Sigmoid colon (tissue), 7 donors: ENCODE measurements at regions of chr6 and their contacts with region 1.

Region 1: DNA sequence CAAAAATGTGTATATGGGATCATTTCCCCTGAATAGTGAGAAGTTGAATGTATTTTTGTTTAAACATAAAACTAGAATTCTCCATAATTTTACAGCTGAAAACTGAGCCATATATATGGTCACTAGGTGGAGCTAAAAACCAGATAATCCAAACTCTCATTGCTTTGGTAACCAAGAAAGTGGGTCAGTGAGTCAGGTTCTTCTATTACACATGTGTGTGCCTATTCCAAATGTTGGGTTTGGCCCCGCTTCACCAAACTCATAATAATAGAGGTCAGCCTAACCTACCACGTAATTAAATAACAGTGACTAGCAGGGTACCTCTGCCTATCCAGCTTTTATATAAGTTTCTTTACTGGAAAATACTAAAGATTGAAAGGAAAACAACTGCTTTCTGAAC is 19.3 kb upstream of the RNGTT start:
- DNase-seq: peak; percentile 84
- H3K4me3 ChIP-seq: no peak overlapping the region
- H3K27ac ChIP-seq: peak overlapping the region in 1 of 4 donors; percentile 45
- H3K4me1 ChIP-seq: peaks cover 0 to 9% (median 7%) of the 10 kb centered on the region in 4 donors
- H3K27me3 ChIP-seq: no peaks in the 10 kb centered on the region
- CTCF ChIP-seq: peak; percentile 48 to 73 (median 66)
- EP300 ChIP-seq: no peak
- POLR2A ChIP-seq: no peak

Region 2: DNA sequence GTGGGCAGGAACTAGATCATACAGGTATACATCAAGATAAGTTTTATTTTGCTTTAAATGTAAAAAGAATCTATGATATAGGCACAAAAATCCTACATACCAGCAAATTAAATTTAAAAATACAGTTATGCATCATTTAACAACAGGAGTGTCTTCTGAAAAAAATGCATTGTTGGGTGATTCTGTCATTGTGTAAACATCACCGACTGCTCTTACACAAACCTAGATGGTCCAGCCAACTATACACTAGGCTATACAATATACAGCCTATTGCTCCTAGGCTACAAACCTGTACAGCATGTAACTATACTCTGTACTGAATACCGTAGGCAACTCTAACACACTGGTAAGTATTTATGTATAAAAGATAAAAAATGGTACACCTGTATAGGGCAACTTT is 158.7 kb before region 1 on chr6:
- intact Hi-C with region 1: no loop called
- DNase-seq: no peak
- H3K4me3 ChIP-seq: no peak overlapping the region
- H3K27ac ChIP-seq: no peak overlapping the region
- H3K4me1 ChIP-seq: no peaks in the 10 kb centered on the region
- H3K27me3 ChIP-seq: no peaks in the 10 kb centered on the region
- CTCF ChIP-seq: no peak
- EP300 ChIP-seq: no peak
- POLR2A ChIP-seq: no peak

Region 3: GRCh38 chr6:89035252-89036106 is 52.8 kb after region 1 on chr6:
- intact Hi-C with region 1: loop called (anchors 2 kb)
- DNase-seq: peak; percentile 99
- H3K4me3 ChIP-seq: peak overlapping the region in 3 of 4 donors; percentile 11 to 18 (median 18)
- H3K27ac ChIP-seq: peak overlapping the region; percentile 90 to 94 (median 92)
- H3K4me1 ChIP-seq: peaks cover 2 to 45% (median 40%) of the 10 kb centered on the region in 4 donors
- H3K27me3 ChIP-seq: no peaks in the 10 kb centered on the region
- CTCF ChIP-seq: no peak
- EP300 ChIP-seq: peak; percentile 97 to 99 (median 98)
- POLR2A ChIP-seq: no peak

Region 4: GRCh38 chr6:89117211-89118108 is 134.7 kb after region 1 on chr6 and contains the start of gene SRSF12:
- intact Hi-C with region 1: loop called (anchors 5 kb)
- DNase-seq: no peak
- H3K4me3 ChIP-seq: peak within 1 kb of the TSS; percentile 55 to 79 (median 76)
- H3K27ac ChIP-seq: peak within 1 kb of the TSS; percentile 62 to 80 (median 70)
- H3K4me1 ChIP-seq: peaks cover 0 to 19% (median 9%) of the 10 kb centered on the region in 4 donors
- H3K27me3 ChIP-seq: no peaks in the 10 kb centered on the region
- CTCF ChIP-seq: peak in 1 of 4 experiments; percentile 7
- EP300 ChIP-seq: no peak
- POLR2A ChIP-seq: no peak
- total RNA-seq, gene SRSF12: 0.82 to 3.6 (median 1.1) TPM

Region 5: DNA sequence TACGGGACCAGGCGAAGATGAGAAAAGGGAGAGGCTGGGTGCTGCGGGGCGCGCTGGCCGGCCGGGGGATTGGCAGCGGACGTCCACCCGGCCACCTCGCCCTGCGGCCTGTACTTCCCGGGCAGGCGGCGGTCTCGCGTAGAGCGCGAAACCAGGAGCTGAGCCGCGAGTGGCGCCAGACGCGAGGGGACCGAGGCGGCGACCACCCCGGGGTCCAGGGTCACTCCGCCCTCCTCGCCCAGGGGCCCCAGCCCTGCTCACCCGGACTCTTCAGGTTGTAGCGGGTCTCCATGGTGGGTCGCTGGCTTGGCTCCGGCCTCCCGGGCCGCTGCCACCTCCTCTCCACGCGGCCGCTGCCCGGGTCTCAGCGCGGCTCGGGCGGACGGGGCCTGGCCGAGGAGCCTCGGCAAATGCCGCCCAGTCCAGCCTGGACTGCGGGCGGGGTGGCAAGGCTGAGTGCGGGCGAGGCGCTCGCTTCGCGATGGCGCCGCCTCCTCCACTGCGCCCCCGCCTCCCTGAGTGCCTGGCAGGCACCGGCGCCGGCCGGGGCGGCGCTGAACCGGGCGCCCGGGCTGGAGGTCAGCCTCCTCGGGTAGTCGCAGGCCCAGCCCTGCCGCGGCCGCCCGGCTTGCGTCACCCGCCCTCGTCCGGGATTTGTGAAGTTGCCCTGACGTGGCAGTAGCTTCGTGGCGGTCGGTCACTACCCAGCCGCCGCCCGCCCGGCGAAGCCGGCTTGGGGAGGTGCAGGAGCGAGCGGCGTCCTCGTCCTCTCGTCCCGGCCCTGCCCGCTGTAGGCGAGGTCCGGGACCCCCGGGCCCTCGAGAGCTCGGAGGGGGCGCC is 369.8 kb after region 1 on chr6 and contains the start of gene UBE2J1:
- intact Hi-C with region 1: loop called (anchors 5 kb)
- DNase-seq: peak; percentile 97
- H3K4me3 ChIP-seq: peak within 1 kb of the TSS; percentile 65 to 92 (median 72)
- H3K27ac ChIP-seq: peak within 1 kb of the TSS; percentile 94 to 99 (median 94)
- H3K4me1 ChIP-seq: peaks cover 0 to 40% (median 36%) of the 10 kb centered on the region in 4 donors
- H3K27me3 ChIP-seq: no peaks in the 10 kb centered on the region
- CTCF ChIP-seq: no peak
- EP300 ChIP-seq: no peak
- POLR2A ChIP-seq: peak; percentile 65 to 78
- total RNA-seq, gene UBE2J1: 29.5 to 36.7 (median 33.8) TPM